PC-3 (cell line): ENCODE measurements at regions of chr17 and their contacts with region 1.

Region 1: DNA sequence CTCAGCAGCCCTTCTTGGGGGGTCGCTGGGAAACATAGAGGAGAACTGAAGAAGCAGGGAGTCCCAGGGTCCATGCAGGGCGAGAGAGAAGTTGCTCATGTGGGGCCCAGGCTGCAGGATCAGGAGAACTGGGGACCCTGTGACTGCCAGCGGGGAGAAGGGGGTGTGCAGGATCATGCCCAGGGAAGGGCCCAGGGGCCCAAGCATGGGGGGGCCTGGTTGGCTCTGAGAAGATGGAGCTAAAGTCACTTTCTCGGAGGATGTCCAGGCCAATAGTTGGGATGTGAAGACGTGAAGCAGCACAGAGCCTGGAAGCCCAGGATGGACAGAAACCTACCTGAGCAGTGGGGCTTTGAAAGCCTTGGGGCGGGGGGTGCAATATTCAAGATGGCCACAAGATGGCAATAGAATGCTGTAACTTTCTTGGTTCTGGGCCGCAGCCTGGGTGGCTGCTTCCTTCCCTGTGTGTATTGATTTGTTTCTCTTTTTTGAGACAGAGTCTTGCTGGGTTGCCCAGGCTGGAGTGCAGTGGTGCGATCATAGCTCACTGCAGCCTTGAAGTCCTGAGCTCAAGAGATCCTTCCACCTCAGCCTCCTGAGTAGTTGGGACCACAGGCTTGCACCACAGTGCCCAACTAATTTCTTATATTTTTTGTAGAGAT is 3.4 kb downstream of the STH start:
- DNase-seq: peak; percentile 88
- ATAC-seq: peak; percentile 79
- H3K4me3 ChIP-seq: no peak overlapping the region
- H3K27ac ChIP-seq: no peak overlapping the region
- H3K4me1 ChIP-seq: peaks cover 12% of the 10 kb centered on the region
- H3K27me3 ChIP-seq: no peaks in the 10 kb centered on the region
- CTCF ChIP-seq: peak; percentile 95

Region 2: GRCh38 chr17:45976755-45977505 is 25.5 kb before region 1 on chr17:
- CTCF ChIA-PET with region 1: no interaction called
- POLR2A ChIA-PET with region 1: no interaction called
- intact Hi-C with region 1: no loop called
- DNase-seq: no peak
- ATAC-seq: peak; percentile 22; the same call in 1 of the 2 replicates
- H3K4me3 ChIP-seq: no peak overlapping the region
- H3K27ac ChIP-seq: no peak overlapping the region
- H3K4me1 ChIP-seq: no peaks in the 10 kb centered on the region
- H3K27me3 ChIP-seq: no peaks in the 10 kb centered on the region
- CTCF ChIP-seq: no peak

Region 3: GRCh38 chr17:46072998-46073397 is 70.6 kb after region 1 on chr17:
- CTCF ChIA-PET with region 1: no interaction called
- POLR2A ChIA-PET with region 1: interaction called, 10 read pairs
- intact Hi-C with region 1: no loop called
- DNase-seq: peak; percentile 60
- ATAC-seq: peak; percentile 70
- H3K4me3 ChIP-seq: no peak overlapping the region
- H3K27ac ChIP-seq: no peak overlapping the region
- H3K4me1 ChIP-seq: 0 out of 2 replicates have a peak, but pooled peaks cover 14% of the 10 kb centered on the region
- H3K27me3 ChIP-seq: no peaks in the 10 kb centered on the region
- CTCF ChIP-seq: no peak

Region 4: GRCh38 chr17:46212634-46213435 is 210.4 kb after region 1 on chr17:
- CTCF ChIA-PET with region 1: interaction called, 12 read pairs
- POLR2A ChIA-PET with region 1: no interaction called
- intact Hi-C with region 1: loop called (anchors 1 kb)
- DNase-seq: peak; percentile 77
- ATAC-seq: peak; percentile 74
- H3K4me3 ChIP-seq: no peak overlapping the region
- H3K27ac ChIP-seq: no peak overlapping the region
- H3K4me1 ChIP-seq: no peaks in the 10 kb centered on the region
- H3K27me3 ChIP-seq: no peaks in the 10 kb centered on the region
- CTCF ChIP-seq: peak; percentile 87